ENCODE measurements at regions of chr5 and their contacts with region 1.

Region 1: DNA sequence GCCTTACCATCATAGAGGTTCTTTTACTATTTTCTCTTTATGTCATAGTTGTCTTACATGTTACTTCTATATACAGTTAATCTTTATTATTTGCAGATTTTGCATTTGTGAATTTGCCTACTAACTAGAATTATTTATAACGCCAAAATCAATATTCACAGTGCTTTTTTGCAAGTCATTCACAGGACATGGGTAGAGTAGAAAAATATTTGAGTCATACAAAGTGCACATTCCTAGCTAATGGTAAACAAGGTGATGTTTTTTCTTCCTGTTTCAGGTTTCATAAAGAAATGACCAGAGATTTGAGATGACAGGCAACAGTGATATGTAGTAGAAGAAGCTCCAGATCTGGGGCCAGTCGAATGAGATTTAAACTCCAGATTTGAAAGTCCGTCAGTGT is 30.0 kb upstream of the OR2Y1 start:
- DNase-seq: no peak
- H3K4me3 ChIP-seq: no peak overlapping the region
- H3K4me3 Mint-ChIP-seq: no peak overlapping the region
- H3K27ac ChIP-seq: no peak overlapping the region
- H3K27ac Mint-ChIP-seq: no peak overlapping the region
- H3K4me1 ChIP-seq: no peaks in the 10 kb centered on the region
- H3K4me1 Mint-ChIP-seq: no peaks in the 10 kb centered on the region
- H3K27me3 ChIP-seq: no peaks in the 10 kb centered on the region
- H3K27me3 Mint-ChIP-seq: peaks cover 13 to 18% of the 10 kb centered on the region in 2 donors

Region 2: DNA sequence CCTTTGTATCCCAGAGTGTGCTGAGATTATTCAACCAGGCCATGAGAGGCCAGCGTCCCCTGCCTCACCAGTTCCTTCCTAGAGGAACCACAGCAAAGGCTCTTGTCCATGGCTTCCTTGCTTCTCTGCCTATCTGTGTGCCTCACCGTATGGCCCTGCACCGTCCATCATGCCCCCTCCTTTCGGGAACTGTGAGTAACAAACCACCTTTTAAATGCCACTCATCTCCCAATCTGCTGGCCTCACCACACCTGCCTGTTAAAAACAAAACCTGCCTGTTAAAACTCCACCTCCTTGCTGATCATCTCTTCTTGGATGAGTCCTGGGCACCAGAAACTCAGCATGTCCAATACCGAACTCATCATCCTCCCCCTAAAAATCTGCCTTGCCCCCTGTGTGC is 25.6 kb before region 1 on chr5:
- CTCF ChIA-PET with region 1: no interaction called
- POLR2A ChIA-PET with region 1: no interaction called
- intact Hi-C with region 1: loop called (anchors 1 kb)
- DNase-seq: no peak
- H3K4me3 ChIP-seq: no peak overlapping the region
- H3K4me3 Mint-ChIP-seq: no peak overlapping the region
- H3K27ac ChIP-seq: no peak overlapping the region
- H3K27ac Mint-ChIP-seq: no peak overlapping the region
- H3K4me1 ChIP-seq: no peaks in the 10 kb centered on the region
- H3K4me1 Mint-ChIP-seq: no peaks in the 10 kb centered on the region
- H3K27me3 ChIP-seq: peaks cover 7% of the 10 kb centered on the region
- H3K27me3 Mint-ChIP-seq: peaks cover 15 to 22% of the 10 kb centered on the region in 2 donors

Region 3: DNA sequence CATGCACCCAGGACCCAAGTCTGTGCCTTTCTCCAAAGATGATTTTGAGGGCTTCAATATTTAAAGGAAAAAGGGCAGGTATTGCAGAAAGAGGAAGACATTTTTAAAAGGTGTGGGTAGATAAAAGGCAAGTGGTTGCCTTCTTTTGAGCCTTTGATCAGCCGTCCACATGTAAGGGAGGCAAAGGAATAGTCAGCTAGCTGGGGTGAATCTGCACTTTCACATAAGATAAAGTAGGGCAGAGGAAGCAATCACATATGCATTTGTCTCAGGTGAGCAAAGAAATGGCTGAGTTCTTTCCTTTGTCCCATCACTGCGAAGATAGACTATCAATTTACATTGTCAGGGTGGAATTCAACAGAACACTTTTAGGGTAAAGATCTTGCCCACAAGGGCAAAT is 12.9 kb after region 1 on chr5:
- CTCF ChIA-PET with region 1: no interaction called
- POLR2A ChIA-PET with region 1: no interaction called
- intact Hi-C with region 1: no loop called
- DNase-seq: no peak
- H3K4me3 ChIP-seq: no peak overlapping the region
- H3K4me3 Mint-ChIP-seq: no peak overlapping the region
- H3K27ac ChIP-seq: no peak overlapping the region
- H3K27ac Mint-ChIP-seq: peak overlapping the region in 2 of 7 donors; percentile 2 to 3
- H3K4me1 ChIP-seq: peaks cover 8% of the 10 kb centered on the region
- H3K4me1 Mint-ChIP-seq: peaks cover 10 to 22% (median 14%) of the 10 kb centered on the region in 4 donors
- H3K27me3 ChIP-seq: no peaks in the 10 kb centered on the region
- H3K27me3 Mint-ChIP-seq: no peaks in the 10 kb centered on the region